PC-3 (cell line): ENCODE measurements at regions of chr3 and their contacts with region 1.

Region 1: GRCh38 chr3:177359593-177360357 is 162.5 kb upstream of the TBL1XR1 start:
- DNase-seq: peak; percentile 99
- ATAC-seq: peak; percentile 59
- H3K4me3 ChIP-seq: peak overlapping the region; percentile 53
- H3K27ac ChIP-seq: peak overlapping the region; percentile 95
- H3K4me1 ChIP-seq: peaks cover 45% of the 10 kb centered on the region
- H3K27me3 ChIP-seq: no peaks in the 10 kb centered on the region
- CTCF ChIP-seq: no peak

Region 2: DNA sequence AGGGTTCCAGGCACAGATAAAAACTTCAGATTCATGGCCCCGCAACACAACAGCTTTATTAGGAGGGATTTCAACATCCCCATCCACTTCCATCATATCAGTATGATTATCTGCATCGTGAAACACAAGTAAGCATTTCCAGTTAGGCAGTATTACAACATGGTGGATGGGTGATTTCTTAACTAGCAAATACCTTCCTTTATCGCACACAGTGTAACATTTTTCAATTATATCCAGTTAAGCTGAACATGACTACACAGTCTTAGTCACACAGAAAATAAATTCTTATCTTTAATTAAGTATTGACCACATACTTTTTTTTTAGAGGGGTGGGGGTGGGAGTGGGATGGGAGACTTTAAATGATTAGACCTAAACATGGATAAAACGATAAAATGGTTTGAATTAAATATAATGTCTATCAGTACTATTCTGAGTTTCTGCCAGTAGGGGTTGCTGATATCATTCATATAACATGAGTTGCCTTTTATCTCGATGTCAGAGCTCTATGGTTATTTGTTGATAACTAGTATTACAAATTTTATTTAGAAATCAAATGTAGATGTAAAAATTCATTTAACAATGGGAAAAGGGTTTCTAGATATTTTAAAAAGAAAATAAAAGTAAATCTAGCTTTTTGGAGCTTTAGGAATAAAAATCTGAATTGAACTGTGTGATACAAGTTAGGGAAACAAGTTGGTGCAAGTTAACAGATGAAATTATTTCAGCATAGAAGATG is 309.1 kb before region 1 on chr3:
- CTCF ChIA-PET with region 1: no interaction called
- POLR2A ChIA-PET with region 1: no interaction called
- intact Hi-C with region 1: loop called (anchors 1 kb)
- DNase-seq: peak; percentile 67
- ATAC-seq: peak; percentile 71
- H3K4me3 ChIP-seq: no peak overlapping the region
- H3K27ac ChIP-seq: no peak overlapping the region
- H3K4me1 ChIP-seq: no peaks in the 10 kb centered on the region
- H3K27me3 ChIP-seq: no peaks in the 10 kb centered on the region
- CTCF ChIP-seq: peak; percentile 75

Region 3: DNA sequence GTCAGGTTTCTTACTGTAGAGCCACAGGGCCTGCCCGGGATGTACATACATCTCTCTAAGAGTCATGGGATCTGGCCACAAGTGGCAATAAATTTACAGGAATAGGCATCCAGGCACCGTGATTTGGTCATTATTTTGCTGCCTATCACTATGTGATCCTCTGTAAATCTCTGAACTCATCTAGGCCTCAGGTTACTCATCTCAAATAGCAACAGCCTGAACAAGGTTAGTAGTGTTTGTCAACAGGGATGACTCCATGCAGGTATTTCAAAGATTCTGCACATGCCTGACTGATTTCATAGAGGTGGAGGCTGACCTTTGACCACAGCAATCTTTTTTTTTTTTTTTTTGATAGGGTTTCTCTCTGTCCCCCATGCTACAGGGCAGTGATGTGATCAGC is 73.7 kb before region 1 on chr3:
- CTCF ChIA-PET with region 1: no interaction called
- POLR2A ChIA-PET with region 1: no interaction called
- intact Hi-C with region 1: loop called (anchors 2 kb)
- DNase-seq: peak; percentile 93
- ATAC-seq: peak; percentile 91
- H3K4me3 ChIP-seq: no peak overlapping the region
- H3K27ac ChIP-seq: peak overlapping the region; percentile 69
- H3K4me1 ChIP-seq: peaks cover 15% of the 10 kb centered on the region
- H3K27me3 ChIP-seq: no peaks in the 10 kb centered on the region
- CTCF ChIP-seq: no peak

Region 4: GRCh38 chr3:177589911-177590381 is 230.2 kb after region 1 on chr3:
- CTCF ChIA-PET with region 1: no interaction called
- POLR2A ChIA-PET with region 1: no interaction called
- intact Hi-C with region 1: loop called (anchors 5 kb)
- DNase-seq: peak; percentile 96
- ATAC-seq: peak; percentile 90
- H3K4me3 ChIP-seq: peak overlapping the region; percentile 21; the same call in 1 of the 2 replicates
- H3K27ac ChIP-seq: peak overlapping the region; percentile 80
- H3K4me1 ChIP-seq: peaks cover 54% of the 10 kb centered on the region
- H3K27me3 ChIP-seq: no peaks in the 10 kb centered on the region
- CTCF ChIP-seq: no peak

Region 5: GRCh38 chr3:177810162-177810623 is 450.4 kb after region 1 on chr3:
- CTCF ChIA-PET with region 1: no interaction called
- POLR2A ChIA-PET with region 1: no interaction called
- intact Hi-C with region 1: loop called (anchors 5 kb)
- DNase-seq: peak; percentile 95
- ATAC-seq: peak; percentile 93
- H3K4me3 ChIP-seq: no peak overlapping the region
- H3K27ac ChIP-seq: peak overlapping the region; percentile 53
- H3K4me1 ChIP-seq: peaks cover 30% of the 10 kb centered on the region
- H3K27me3 ChIP-seq: no peaks in the 10 kb centered on the region
- CTCF ChIP-seq: no peak

Region 6: GRCh38 chr3:178385280-178385952 is 1025.6 kb after region 1 on chr3:
- CTCF ChIA-PET with region 1: no interaction called
- POLR2A ChIA-PET with region 1: no interaction called
- intact Hi-C with region 1: loop called (anchors 2 kb)
- DNase-seq: peak; percentile 72
- ATAC-seq: peak; percentile 45; the same call in 1 of the 2 replicates
- H3K4me3 ChIP-seq: no peak overlapping the region
- H3K27ac ChIP-seq: no peak overlapping the region
- H3K4me1 ChIP-seq: peaks cover 18% of the 10 kb centered on the region
- H3K27me3 ChIP-seq: no peaks in the 10 kb centered on the region
- CTCF ChIP-seq: peak; percentile 94